HEK293 (cell line): ENCODE measurements at regions of chr10 and their contacts with region 1.

Region 1: GRCh38 chr10:58334817-58335305 is at the start of gene UBE2D1:
- H3K4me3 ChIP-seq: peak within 1 kb of the TSS; percentile 85
- H3K27ac ChIP-seq: peak within 1 kb of the TSS; percentile 65; the same call in 1 of the 2 replicates
- H3K4me1 ChIP-seq: no peaks in the 10 kb centered on the region
- CTCF ChIP-seq: 0 out of 2 replicates have a peak, but pooled peaks have one; percentile 43

Region 2: DNA sequence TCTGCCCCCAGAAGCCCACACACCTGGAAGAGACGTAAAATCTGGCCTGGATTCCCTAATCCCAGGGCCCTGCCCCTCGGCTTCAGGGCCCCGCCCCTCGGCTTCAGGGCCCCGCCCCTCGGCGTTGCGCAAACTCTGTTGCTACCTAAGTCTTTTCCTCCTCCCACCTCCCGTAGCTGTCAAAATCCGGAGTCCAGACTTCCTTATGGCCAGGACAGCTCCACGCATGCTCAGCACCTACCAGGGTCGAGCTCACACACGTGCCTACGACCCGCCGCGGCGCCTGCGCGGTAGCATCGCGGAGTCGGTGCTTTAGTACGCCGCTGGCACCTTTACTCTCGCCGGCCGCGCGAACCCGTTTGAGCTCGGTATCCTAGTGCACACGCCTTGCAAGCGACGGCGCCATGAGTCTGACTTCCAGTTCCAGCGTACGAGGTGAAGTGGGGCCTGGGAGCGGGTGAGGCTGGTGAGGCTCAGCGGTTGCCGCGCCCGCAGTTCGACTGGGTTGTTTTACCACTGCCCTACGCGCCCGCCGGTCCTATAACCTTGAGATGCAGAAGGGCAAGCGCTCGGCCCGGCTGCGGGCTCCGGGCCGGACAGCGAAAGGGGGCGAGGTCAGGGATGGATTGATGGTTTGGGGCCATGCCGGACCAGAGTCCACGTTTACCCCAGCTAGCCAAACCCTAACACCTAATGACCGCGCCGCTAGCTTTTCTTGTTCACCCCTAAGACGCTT is 65.8 kb before region 1 on chr10 and contains the start of gene CISD1:
- CTCF ChIA-PET with region 1: no interaction called
- POLR2A ChIA-PET with region 1: interaction called, 13 read pairs
- H3K4me3 ChIP-seq: peak within 1 kb of the TSS; percentile 64
- H3K27ac ChIP-seq: peak within 1 kb of the TSS; percentile 94
- H3K4me1 ChIP-seq: peaks cover 5% of the 10 kb centered on the region; the same call in 1 of the 2 replicates
- CTCF ChIP-seq: no peak

Region 3: GRCh38 chr10:58384999-58385783 is 50.3 kb after region 1 on chr10 and contains the start of gene TFAM:
- CTCF ChIA-PET with region 1: interaction called, 6 read pairs
- POLR2A ChIA-PET with region 1: interaction called, 11 read pairs
- H3K4me3 ChIP-seq: peak within 1 kb of the TSS; percentile 61
- H3K27ac ChIP-seq: peak within 1 kb of the TSS; percentile 89
- H3K4me1 ChIP-seq: no peaks in the 10 kb centered on the region
- CTCF ChIP-seq: peak; percentile 96

Region 4: GRCh38 chr10:58631715-58632114 is 296.9 kb after region 1 on chr10:
- CTCF ChIA-PET with region 1: no interaction called
- POLR2A ChIA-PET with region 1: no interaction called
- H3K4me3 ChIP-seq: no peak overlapping the region
- H3K27ac ChIP-seq: no peak overlapping the region
- H3K4me1 ChIP-seq: no peaks in the 10 kb centered on the region
- CTCF ChIP-seq: no peak